ENCODE measurements at regions of chr13 and their contacts with region 1.

Region 1: GRCh38 chr13:46530084-46530935 is 22.7 kb upstream of the LRCH1 start:
- DNase-seq: no peak
- H3K4me3 ChIP-seq: no peak overlapping the region
- H3K27ac ChIP-seq: no peak overlapping the region
- H3K4me1 ChIP-seq: no peaks in the 10 kb centered on the region
- H3K27me3 ChIP-seq: peaks cover 7% of the 10 kb centered on the region; the same call in 1 of the 2 replicates
- CTCF ChIP-seq: no peak

Region 2: GRCh38 chr13:45297456-45298205 is 1232.7 kb before region 1 on chr13:
- CTCF ChIA-PET with region 1: no interaction called
- POLR2A ChIA-PET with region 1: no interaction called
- intact Hi-C with region 1: no loop called
- DNase-seq: no peak
- H3K4me3 ChIP-seq: no peak overlapping the region
- H3K27ac ChIP-seq: no peak overlapping the region
- H3K4me1 ChIP-seq: peaks cover 8% of the 10 kb centered on the region
- H3K27me3 ChIP-seq: no peaks in the 10 kb centered on the region
- CTCF ChIP-seq: no peak

Region 3: GRCh38 chr13:46520166-46520565 is 10.1 kb before region 1 on chr13:
- CTCF ChIA-PET with region 1: no interaction called
- POLR2A ChIA-PET with region 1: interaction called, 25 read pairs
- intact Hi-C with region 1: no loop called
- DNase-seq: no peak
- H3K4me3 ChIP-seq: no peak overlapping the region
- H3K27ac ChIP-seq: no peak overlapping the region
- H3K4me1 ChIP-seq: no peaks in the 10 kb centered on the region
- H3K27me3 ChIP-seq: peaks cover 20% of the 10 kb centered on the region
- CTCF ChIP-seq: no peak

Region 4: DNA sequence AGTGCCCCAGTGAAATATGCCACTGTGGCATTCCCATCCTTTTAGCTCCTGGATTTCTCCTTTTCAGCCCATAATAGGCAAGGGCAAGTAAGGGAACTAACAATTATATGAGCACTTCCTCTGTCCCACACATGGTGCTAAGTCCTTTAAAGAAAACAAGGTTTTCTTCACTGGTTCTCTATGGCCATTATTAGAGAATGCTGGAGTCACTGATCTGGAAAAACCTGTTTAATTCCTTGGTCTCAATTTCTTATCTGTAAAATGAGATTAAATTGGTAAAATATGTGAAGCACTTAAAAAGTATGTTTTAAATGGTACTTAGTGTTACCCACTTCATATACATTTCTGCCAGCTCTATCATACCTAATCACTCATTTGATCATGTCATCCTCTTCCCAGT is 62.0 kb after region 1 on chr13:
- CTCF ChIA-PET with region 1: no interaction called
- POLR2A ChIA-PET with region 1: no interaction called
- intact Hi-C with region 1: no loop called
- DNase-seq: peak in 1 of 2 experiments; percentile 56
- H3K4me3 ChIP-seq: no peak overlapping the region
- H3K27ac ChIP-seq: no peak overlapping the region
- H3K4me1 ChIP-seq: peaks cover 40% of the 10 kb centered on the region
- H3K27me3 ChIP-seq: no peaks in the 10 kb centered on the region
- CTCF ChIP-seq: no peak

Region 5: GRCh38 chr13:46603165-46603603 is 72.9 kb after region 1 on chr13:
- CTCF ChIA-PET with region 1: no interaction called
- POLR2A ChIA-PET with region 1: no interaction called
- intact Hi-C with region 1: no loop called
- DNase-seq: no peak
- H3K4me3 ChIP-seq: no peak overlapping the region
- H3K27ac ChIP-seq: no peak overlapping the region
- H3K4me1 ChIP-seq: peaks cover 24% of the 10 kb centered on the region
- H3K27me3 ChIP-seq: no peaks in the 10 kb centered on the region
- CTCF ChIP-seq: no peak

Region 6: DNA sequence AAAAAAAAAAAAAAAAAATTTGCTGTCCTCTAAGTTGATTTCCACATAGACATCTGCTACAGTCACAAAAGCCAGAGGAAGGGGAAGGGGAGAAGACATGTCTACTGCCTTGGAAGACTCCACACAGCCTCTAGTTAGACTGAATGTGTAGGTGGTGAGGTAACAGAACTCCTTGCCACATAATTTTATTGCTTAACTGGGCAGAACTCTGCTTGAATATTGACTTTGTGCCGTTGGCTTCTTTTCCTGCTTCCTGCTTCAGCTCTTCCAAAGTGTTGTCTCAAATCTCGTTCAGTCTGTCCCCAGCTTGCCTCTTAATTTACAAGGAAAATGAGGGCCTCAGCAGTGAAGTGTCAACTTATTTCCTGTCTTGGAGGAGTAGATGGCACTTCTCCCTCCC is 229.5 kb after region 1 on chr13:
- CTCF ChIA-PET with region 1: no interaction called
- POLR2A ChIA-PET with region 1: no interaction called
- intact Hi-C with region 1: no loop called
- DNase-seq: no peak
- H3K4me3 ChIP-seq: no peak overlapping the region
- H3K27ac ChIP-seq: no peak overlapping the region
- H3K4me1 ChIP-seq: peaks cover 7% of the 10 kb centered on the region; the same call in 1 of the 2 replicates
- H3K27me3 ChIP-seq: no peaks in the 10 kb centered on the region
- CTCF ChIP-seq: no peak

Measured in PC-9 (cell line).